ENCODE measurements at regions of chr2 and their contacts with region 1.

Region 1: GRCh38 chr2:179129574-179130238 is 79.8 kb upstream of the CCDC141 start:
- DNase-seq: no peak
- ATAC-seq: no peak
- H3K4me3 Mint-ChIP-seq: no peak overlapping the region
- H3K27ac Mint-ChIP-seq: no peak overlapping the region
- H3K4me1 Mint-ChIP-seq: peaks cover 2% of the 10 kb centered on the region
- H3K27me3 Mint-ChIP-seq: no peaks in the 10 kb centered on the region

Region 2: GRCh38 chr2:178891265-178891958 is 238.3 kb before region 1 on chr2:
- CTCF ChIA-PET with region 1: interaction called, 12 read pairs
- DNase-seq: peak; percentile 73
- ATAC-seq: peak; percentile 79
- H3K4me3 Mint-ChIP-seq: no peak overlapping the region
- H3K27ac Mint-ChIP-seq: no peak overlapping the region
- H3K4me1 Mint-ChIP-seq: peaks cover 2% of the 10 kb centered on the region
- H3K27me3 Mint-ChIP-seq: peaks cover 2% of the 10 kb centered on the region

Region 3: GRCh38 chr2:179020156-179020750 is 109.5 kb before region 1 on chr2:
- CTCF ChIA-PET with region 1: interaction called, 10 read pairs
- DNase-seq: peak; percentile 62
- ATAC-seq: peak; percentile 88
- H3K4me3 Mint-ChIP-seq: no peak overlapping the region
- H3K27ac Mint-ChIP-seq: no peak overlapping the region
- H3K4me1 Mint-ChIP-seq: peaks cover 4% of the 10 kb centered on the region
- H3K27me3 Mint-ChIP-seq: no peaks in the 10 kb centered on the region

Measured in activated CD8-positive, alpha-beta memory T cell treated with anti-CD3 and anti-CD28 coated beads, Interleukin-2, amount 10 ng/mL, durations not matched to agents 7 days and 5 days (primary cell).